T-cell (primary cell): ENCODE measurements at regions of chr4 and their contacts with region 1.

Region 1: GRCh38 chr4:89226665-89227574 is 80.7 kb downstream of the GPRIN3 start:
- DNase-seq: peak; percentile 36 to 88 (median 71)
- ATAC-seq: peak; percentile 82 to 93 (median 91)
- H3K4me3 ChIP-seq: no peak overlapping the region
- H3K4me3 Mint-ChIP-seq: peak overlapping the region in 1 of 3 donors; percentile 54
- H3K27ac ChIP-seq: no peak overlapping the region
- H3K27ac Mint-ChIP-seq: no peak overlapping the region
- H3K4me1 ChIP-seq: no peaks in the 10 kb centered on the region
- H3K4me1 Mint-ChIP-seq: peaks cover 0 to 6% (median 6%) of the 10 kb centered on the region in 3 donors
- H3K27me3 ChIP-seq: no peaks in the 10 kb centered on the region
- H3K27me3 Mint-ChIP-seq: peaks cover 0 to 4% of the 10 kb centered on the region in 2 donors

Region 2: DNA sequence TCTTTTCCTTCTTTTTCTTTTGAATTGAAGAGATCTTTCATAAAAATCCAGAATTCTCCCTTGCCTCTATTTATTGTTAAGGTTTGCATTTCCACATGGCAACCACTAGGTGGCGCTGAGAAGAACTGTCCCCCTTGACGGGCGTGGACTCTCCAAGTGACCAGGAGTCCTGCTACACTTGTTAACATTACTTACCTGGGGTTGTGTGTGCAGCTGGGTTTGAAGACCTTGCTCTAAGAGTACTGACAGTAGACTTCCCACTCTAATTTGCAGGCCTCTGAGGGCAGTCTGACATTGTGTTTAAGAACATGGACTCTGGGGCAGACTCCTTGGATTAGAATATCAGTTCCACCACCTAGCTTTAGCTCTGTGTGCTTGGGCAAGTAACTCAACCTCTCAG is 27.9 kb after region 1 on chr4:
- CTCF ChIA-PET with region 1: interaction called, 8 to 15 read pairs
- POLR2A ChIA-PET with region 1: interaction called in 1 of 2 experiments, 4 read pairs
- DNase-seq: peak in 32 of 35 experiments; percentile 2 to 77 (median 32)
- ATAC-seq: peak; percentile 50 to 62 (median 54)
- H3K4me3 ChIP-seq: no peak overlapping the region
- H3K4me3 Mint-ChIP-seq: peak overlapping the region in 1 of 3 donors; percentile 21
- H3K27ac ChIP-seq: peak overlapping the region; percentile 33
- H3K27ac Mint-ChIP-seq: peak overlapping the region; percentile 81 to 89
- H3K4me1 ChIP-seq: peaks cover 14 to 26% of the 10 kb centered on the region in 2 experiments
- H3K4me1 Mint-ChIP-seq: peaks cover 79 to 84% (median 83%) of the 10 kb centered on the region in 3 donors
- H3K27me3 ChIP-seq: no peaks in the 10 kb centered on the region
- H3K27me3 Mint-ChIP-seq: no peaks in the 10 kb centered on the region

Region 3: GRCh38 chr4:89434364-89434988 is 207.6 kb after region 1 on chr4:
- CTCF ChIA-PET with region 1: interaction called, 30 to 68 read pairs
- POLR2A ChIA-PET with region 1: no interaction called
- DNase-seq: peak in 6 of 35 experiments; percentile 4 to 69 (median 10)
- ATAC-seq: peak; percentile 56 to 74 (median 69)
- H3K4me3 ChIP-seq: no peak overlapping the region
- H3K4me3 Mint-ChIP-seq: no peak overlapping the region
- H3K27ac ChIP-seq: no peak overlapping the region
- H3K27ac Mint-ChIP-seq: no peak overlapping the region
- H3K4me1 ChIP-seq: peaks cover 2 to 6% of the 10 kb centered on the region in 2 experiments
- H3K4me1 Mint-ChIP-seq: peaks cover 9 to 15% (median 14%) of the 10 kb centered on the region in 3 donors
- H3K27me3 ChIP-seq: no peaks in the 10 kb centered on the region
- H3K27me3 Mint-ChIP-seq: no peaks in the 10 kb centered on the region

Region 4: DNA sequence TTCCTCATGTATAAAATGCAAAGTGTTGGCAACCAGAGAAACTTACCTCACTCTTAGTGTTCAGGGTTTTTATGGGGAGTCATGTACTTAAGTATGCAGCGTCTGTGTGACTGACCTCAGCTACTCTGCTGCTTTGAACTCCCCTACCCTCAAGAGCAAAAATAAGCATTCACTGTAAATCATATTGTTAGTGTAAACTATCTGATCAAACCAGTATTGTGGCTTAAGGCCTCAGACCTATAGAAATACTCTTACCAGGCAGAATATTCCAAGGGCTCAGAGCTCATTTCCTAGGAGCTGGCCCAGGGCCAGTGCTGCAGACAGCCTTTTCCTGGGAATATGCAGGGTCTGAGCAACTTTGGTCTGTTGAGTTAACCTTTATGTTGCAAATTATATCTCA is 1353.4 kb after region 1 on chr4:
- CTCF ChIA-PET with region 1: no interaction called
- POLR2A ChIA-PET with region 1: no interaction called
- DNase-seq: no peak
- ATAC-seq: no peak
- H3K4me3 ChIP-seq: no peak overlapping the region
- H3K4me3 Mint-ChIP-seq: no peak overlapping the region
- H3K27ac ChIP-seq: no peak overlapping the region
- H3K27ac Mint-ChIP-seq: no peak overlapping the region
- H3K4me1 ChIP-seq: no peaks in the 10 kb centered on the region
- H3K4me1 Mint-ChIP-seq: no peaks in the 10 kb centered on the region
- H3K27me3 ChIP-seq: no peaks in the 10 kb centered on the region
- H3K27me3 Mint-ChIP-seq: no peaks in the 10 kb centered on the region